ENCODE measurements at regions of chr15 and their contacts with region 1.

Region 1: GRCh38 chr15:82809404-82810060 is at the start of gene WHAMM:
- DNase-seq: peak; percentile 94 to 98 (median 96)
- H3K4me3 ChIP-seq: peak within 1 kb of the TSS; percentile 89 to 94
- H3K4me3 Mint-ChIP-seq: peak within 1 kb of the TSS; percentile 88 to 100 (median 96)
- H3K27ac ChIP-seq: peak within 1 kb of the TSS; percentile 99
- H3K27ac Mint-ChIP-seq: peak within 1 kb of the TSS; percentile 95 to 100 (median 97)
- H3K4me1 ChIP-seq: peaks cover 35% of the 10 kb centered on the region
- H3K4me1 Mint-ChIP-seq: peaks cover 15 to 40% (median 28%) of the 10 kb centered on the region in 4 donors
- H3K27me3 ChIP-seq: no peaks in the 10 kb centered on the region
- H3K27me3 Mint-ChIP-seq: no peaks in the 10 kb centered on the region
- total RNA-seq, gene WHAMM: 31.6 to 33.5 TPM

Region 2: GRCh38 chr15:82749951-82750830 is 59.3 kb before region 1 on chr15:
- CTCF ChIA-PET with region 1: interaction called, 6 read pairs
- POLR2A ChIA-PET with region 1: interaction called, 40 read pairs
- intact Hi-C with region 1: loop called (anchors 1 kb)
- DNase-seq: peak; percentile 65 to 87 (median 73)
- H3K4me3 ChIP-seq: peak overlapping the region; percentile 82 to 86
- H3K4me3 Mint-ChIP-seq: peak overlapping the region; percentile 96 to 100 (median 99)
- H3K27ac ChIP-seq: peak overlapping the region; percentile 74
- H3K27ac Mint-ChIP-seq: peak overlapping the region; percentile 77 to 99 (median 95)
- H3K4me1 ChIP-seq: peaks cover 23% of the 10 kb centered on the region
- H3K4me1 Mint-ChIP-seq: peaks cover 26 to 55% (median 40%) of the 10 kb centered on the region in 4 donors
- H3K27me3 ChIP-seq: no peaks in the 10 kb centered on the region
- H3K27me3 Mint-ChIP-seq: no peaks in the 10 kb centered on the region

Region 3: DNA sequence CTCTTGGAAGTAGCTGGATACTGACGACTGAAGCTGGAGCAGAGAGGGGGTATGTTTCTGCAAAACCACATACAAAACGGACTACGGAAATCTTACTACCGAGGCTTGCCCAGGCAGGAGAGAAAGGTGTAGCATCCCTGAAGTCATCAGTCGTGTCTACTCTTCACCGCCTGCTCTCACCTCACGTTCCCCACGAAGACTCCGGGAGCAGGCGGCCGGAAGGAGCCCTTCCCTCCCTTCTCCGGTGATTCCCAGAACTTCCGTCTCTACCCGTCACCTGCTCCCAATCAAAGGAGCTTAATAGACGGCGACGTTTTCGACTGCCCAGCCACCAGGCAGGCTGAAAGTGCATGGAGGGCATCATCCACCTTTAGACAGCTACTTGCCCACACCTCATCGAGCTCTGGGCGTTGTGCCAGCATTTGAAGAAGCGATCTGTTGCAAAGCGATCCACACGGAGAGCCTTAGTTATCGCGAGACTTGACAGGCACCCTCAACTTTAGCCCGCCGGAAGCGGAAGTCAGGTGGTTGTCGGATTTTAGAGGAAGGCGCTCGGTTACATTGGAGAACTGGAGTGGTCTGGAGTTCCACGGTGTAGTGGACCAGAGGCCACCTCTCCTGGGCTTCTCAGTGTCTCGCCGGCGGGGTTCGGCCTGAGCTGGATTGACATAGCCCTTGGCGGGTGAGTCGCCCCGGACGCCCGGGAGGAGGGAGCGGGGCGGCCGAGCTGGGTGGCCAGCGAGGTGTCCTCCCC is 176.3 kb after region 1 on chr15 and contains the start of gene RAMAC:
- CTCF ChIA-PET with region 1: no interaction called
- POLR2A ChIA-PET with region 1: interaction called, 20 read pairs
- intact Hi-C with region 1: loop called (anchors 2 kb)
- DNase-seq: peak; percentile 90 to 98 (median 93)
- H3K4me3 ChIP-seq: peak within 1 kb of the TSS; percentile 87 to 91
- H3K4me3 Mint-ChIP-seq: peak within 1 kb of the TSS; percentile 96 to 99 (median 99)
- H3K27ac ChIP-seq: peak within 1 kb of the TSS; percentile 71
- H3K27ac Mint-ChIP-seq: peak within 1 kb of the TSS; percentile 91 to 99 (median 96)
- H3K4me1 ChIP-seq: peaks cover 18% of the 10 kb centered on the region
- H3K4me1 Mint-ChIP-seq: peaks cover 15 to 32% (median 25%) of the 10 kb centered on the region in 4 donors
- H3K27me3 ChIP-seq: no peaks in the 10 kb centered on the region
- H3K27me3 Mint-ChIP-seq: no peaks in the 10 kb centered on the region
- total RNA-seq, gene RAMAC: 19.3 to 22.0 TPM

Region 4: GRCh38 chr15:83053151-83053550 is 243.6 kb after region 1 on chr15:
- CTCF ChIA-PET with region 1: no interaction called
- POLR2A ChIA-PET with region 1: no interaction called
- intact Hi-C with region 1: no loop called
- DNase-seq: no peak
- H3K4me3 ChIP-seq: no peak overlapping the region
- H3K4me3 Mint-ChIP-seq: no peak overlapping the region
- H3K27ac ChIP-seq: no peak overlapping the region
- H3K27ac Mint-ChIP-seq: no peak overlapping the region
- H3K4me1 ChIP-seq: peaks cover 2% of the 10 kb centered on the region
- H3K4me1 Mint-ChIP-seq: peaks cover 15 to 23% (median 18%) of the 10 kb centered on the region in 4 donors
- H3K27me3 ChIP-seq: no peaks in the 10 kb centered on the region
- H3K27me3 Mint-ChIP-seq: no peaks in the 10 kb centered on the region

Region 5: GRCh38 chr15:83066734-83067637 is 257.5 kb after region 1 on chr15 and contains the start of gene BTBD1:
- CTCF ChIA-PET with region 1: no interaction called
- POLR2A ChIA-PET with region 1: interaction called, 3 read pairs
- intact Hi-C with region 1: loop called (anchors 10 kb)
- DNase-seq: peak; percentile 72 to 82 (median 78)
- H3K4me3 ChIP-seq: peak within 1 kb of the TSS; percentile 58 to 82
- H3K4me3 Mint-ChIP-seq: peak within 1 kb of the TSS; percentile 78 to 96 (median 86)
- H3K27ac ChIP-seq: peak within 1 kb of the TSS; percentile 78
- H3K27ac Mint-ChIP-seq: peak within 1 kb of the TSS; percentile 58 to 94 (median 84)
- H3K4me1 ChIP-seq: peaks cover 44% of the 10 kb centered on the region
- H3K4me1 Mint-ChIP-seq: peaks cover 6 to 16% (median 13%) of the 10 kb centered on the region in 4 donors
- H3K27me3 ChIP-seq: no peaks in the 10 kb centered on the region
- H3K27me3 Mint-ChIP-seq: no peaks in the 10 kb centered on the region
- total RNA-seq, gene BTBD1: 36.5 to 39.6 TPM

Measured in CD4-positive, alpha-beta memory T cell (primary cell).